ENCODE measurements at regions of chr19 and their contacts with region 1.

Region 1: GRCh38 chr19:50922317-50922853 is 11.2 kb upstream of the KLK4 start:
- DNase-seq: peak; percentile 64 to 71 (median 68)
- H3K4me3 ChIP-seq: no peak overlapping the region
- H3K4me3 Mint-ChIP-seq: no peak overlapping the region
- H3K27ac ChIP-seq: no peak overlapping the region
- H3K27ac Mint-ChIP-seq: peak overlapping the region in 1 of 7 donors; percentile 55
- H3K4me1 ChIP-seq: peaks cover 5% of the 10 kb centered on the region
- H3K4me1 Mint-ChIP-seq: peaks cover 4 to 10% (median 7%) of the 10 kb centered on the region in 4 donors
- H3K27me3 ChIP-seq: no peaks in the 10 kb centered on the region
- H3K27me3 Mint-ChIP-seq: peaks cover 35 to 38% of the 10 kb centered on the region in 2 donors

Region 2: DNA sequence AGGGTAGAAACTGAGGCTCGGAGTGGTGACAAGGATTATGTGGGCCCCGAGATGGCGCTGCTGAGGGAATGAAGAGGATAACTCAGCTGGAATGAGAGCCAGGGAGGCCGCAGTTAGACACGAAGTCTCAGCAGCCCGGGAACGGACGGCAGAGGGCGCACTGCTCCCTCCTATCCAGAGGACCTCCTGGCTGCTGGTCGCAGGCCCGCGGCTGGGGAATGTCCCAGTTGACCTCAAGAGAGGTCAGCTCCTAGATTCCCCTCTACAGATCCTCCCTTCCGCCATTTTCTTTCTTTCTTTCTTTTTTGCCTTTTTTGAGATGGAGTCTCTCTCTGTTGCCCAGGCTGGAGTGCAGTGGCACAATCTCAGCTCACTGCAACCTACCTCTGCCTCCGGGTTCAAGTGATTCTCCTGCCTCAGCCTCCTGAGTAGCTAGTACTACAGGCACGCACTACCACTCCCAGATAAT is 384.6 kb before region 1 on chr19:
- CTCF ChIA-PET with region 1: interaction called, 11 read pairs
- POLR2A ChIA-PET with region 1: no interaction called
- intact Hi-C with region 1: loop called (anchors 1 kb)
- DNase-seq: peak in 4 of 5 donors; percentile 26 to 35 (median 30)
- H3K4me3 ChIP-seq: no peak overlapping the region
- H3K4me3 Mint-ChIP-seq: no peak overlapping the region
- H3K27ac ChIP-seq: no peak overlapping the region
- H3K27ac Mint-ChIP-seq: no peak overlapping the region
- H3K4me1 ChIP-seq: no peaks in the 10 kb centered on the region
- H3K4me1 Mint-ChIP-seq: no peaks in the 10 kb centered on the region
- H3K27me3 ChIP-seq: no peaks in the 10 kb centered on the region
- H3K27me3 Mint-ChIP-seq: peaks cover 11 to 23% of the 10 kb centered on the region in 2 donors

Region 3: GRCh38 chr19:50705422-50706019 is 216.9 kb before region 1 on chr19:
- CTCF ChIA-PET with region 1: no interaction called
- POLR2A ChIA-PET with region 1: no interaction called
- intact Hi-C with region 1: loop called (anchors 5 kb)
- DNase-seq: peak in 1 of 5 donors; percentile 17
- H3K4me3 ChIP-seq: no peak overlapping the region
- H3K4me3 Mint-ChIP-seq: no peak overlapping the region
- H3K27ac ChIP-seq: no peak overlapping the region
- H3K27ac Mint-ChIP-seq: no peak overlapping the region
- H3K4me1 ChIP-seq: no peaks in the 10 kb centered on the region
- H3K4me1 Mint-ChIP-seq: no peaks in the 10 kb centered on the region
- H3K27me3 ChIP-seq: no peaks in the 10 kb centered on the region
- H3K27me3 Mint-ChIP-seq: peaks cover 21 to 37% of the 10 kb centered on the region in 2 donors

Region 4: DNA sequence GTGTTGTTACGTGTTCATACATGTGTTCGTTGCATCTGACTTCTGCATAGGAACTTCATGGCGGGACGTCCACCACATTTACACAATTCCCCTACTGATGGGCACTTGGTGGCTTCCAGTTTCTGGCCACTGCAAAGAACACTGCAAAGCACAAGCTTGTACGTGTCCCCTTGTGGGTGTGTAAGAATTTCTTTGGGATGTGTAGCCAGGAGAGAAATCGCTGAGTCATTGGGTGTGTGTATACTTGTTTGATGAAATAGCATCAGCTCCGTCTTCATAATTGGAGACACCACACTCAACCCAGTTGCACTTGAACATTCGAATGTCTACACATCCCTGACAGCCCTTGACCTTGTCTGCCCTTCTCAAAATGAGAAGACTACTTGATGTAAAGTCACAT is 11.3 kb after region 1 on chr19:
- CTCF ChIA-PET with region 1: interaction called, 23 read pairs
- POLR2A ChIA-PET with region 1: no interaction called
- intact Hi-C with region 1: no loop called
- DNase-seq: no peak
- H3K4me3 ChIP-seq: no peak overlapping the region
- H3K4me3 Mint-ChIP-seq: no peak overlapping the region
- H3K27ac ChIP-seq: no peak overlapping the region
- H3K27ac Mint-ChIP-seq: no peak overlapping the region
- H3K4me1 ChIP-seq: no peaks in the 10 kb centered on the region
- H3K4me1 Mint-ChIP-seq: peaks cover 0 to 4% (median 3%) of the 10 kb centered on the region in 4 donors
- H3K27me3 ChIP-seq: no peaks in the 10 kb centered on the region
- H3K27me3 Mint-ChIP-seq: peaks cover 18 to 24% of the 10 kb centered on the region in 2 donors

Region 5: GRCh38 chr19:51097166-51097738 is 174.9 kb after region 1 on chr19:
- CTCF ChIA-PET with region 1: no interaction called
- POLR2A ChIA-PET with region 1: no interaction called
- intact Hi-C with region 1: loop called (anchors 10 kb)
- DNase-seq: peak; percentile 49 to 57 (median 56)
- H3K4me3 ChIP-seq: no peak overlapping the region
- H3K4me3 Mint-ChIP-seq: peak overlapping the region in 1 of 8 donors; percentile 36
- H3K27ac ChIP-seq: no peak overlapping the region
- H3K27ac Mint-ChIP-seq: peak overlapping the region in 6 of 7 donors; percentile 35 to 77 (median 47)
- H3K4me1 ChIP-seq: peaks cover 10% of the 10 kb centered on the region
- H3K4me1 Mint-ChIP-seq: peaks cover 19 to 35% (median 26%) of the 10 kb centered on the region in 4 donors
- H3K27me3 ChIP-seq: no peaks in the 10 kb centered on the region
- H3K27me3 Mint-ChIP-seq: no peaks in the 10 kb centered on the region

Measured in CD4-positive, alpha-beta memory T cell (primary cell).